Activated CD4-positive, alpha-beta memory T cell treated with anti-CD3 and anti-CD28 coated beads for 36 hours (primary cell): ENCODE measurements at regions of chr14 and their contacts with region 1.

Region 1: DNA sequence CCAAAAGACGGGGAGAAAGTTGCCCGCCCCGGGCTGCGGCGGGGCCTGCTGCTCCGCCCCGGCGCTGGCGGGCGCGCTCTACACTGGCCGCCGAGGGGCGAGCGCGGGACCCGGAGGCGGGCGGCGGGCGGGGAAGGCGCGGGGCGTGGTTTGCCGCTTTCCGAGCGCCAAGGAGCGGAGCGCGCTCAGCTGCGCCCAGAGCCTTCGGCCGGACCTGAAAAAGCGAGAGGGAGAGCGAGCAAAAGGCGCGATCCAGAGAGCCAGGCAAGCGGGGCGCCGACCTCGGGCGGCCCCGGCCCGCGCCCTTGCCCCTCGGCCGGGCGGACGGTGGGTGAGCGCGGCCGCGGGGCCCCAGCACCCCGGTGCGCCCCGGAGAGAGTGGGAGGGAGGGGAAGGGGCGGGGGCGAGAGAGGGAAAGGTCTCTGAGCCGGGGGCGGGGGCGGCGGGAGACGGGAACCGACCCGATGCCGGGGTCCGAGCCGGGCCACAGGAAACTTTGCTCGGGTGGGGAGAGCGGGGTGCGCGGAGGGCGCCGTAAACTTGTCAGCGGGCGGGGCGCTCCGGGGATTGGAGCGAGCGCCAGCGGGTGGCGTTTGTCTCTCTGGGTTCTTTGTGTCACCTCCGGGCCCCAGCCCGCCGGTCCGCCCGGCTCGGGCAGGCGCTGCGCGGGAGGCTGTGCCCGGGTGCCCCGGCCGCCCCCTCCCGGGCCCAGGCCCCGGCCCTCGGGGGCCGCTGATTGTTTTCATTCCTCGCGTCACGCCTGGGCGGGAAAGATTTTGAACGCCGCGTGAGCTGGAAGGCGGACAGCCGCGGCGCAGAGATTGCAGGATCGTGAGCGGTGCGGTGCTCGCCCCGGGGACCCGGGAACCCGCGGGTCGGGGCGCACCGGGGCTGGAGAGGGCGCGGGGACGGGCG is at the start of gene SYNE2:
- DNase-seq: peak; percentile 87
- H3K4me3 Mint-ChIP-seq: peak within 1 kb of the TSS; percentile 89
- H3K27ac Mint-ChIP-seq: peak within 1 kb of the TSS; percentile 86
- H3K4me1 Mint-ChIP-seq: peaks cover 39% of the 10 kb centered on the region
- H3K27me3 Mint-ChIP-seq: no peaks in the 10 kb centered on the region
- total RNA-seq, gene SYNE2: 27.6 to 27.7 TPM

Region 2: GRCh38 chr14:63470962-63471793 is 381.9 kb before region 1 on chr14:
- CTCF ChIA-PET with region 1: no interaction called
- POLR2A ChIA-PET with region 1: no interaction called
- intact Hi-C with region 1: loop called (anchors 10 kb)
- DNase-seq: no peak
- H3K4me3 Mint-ChIP-seq: no peak overlapping the region
- H3K27ac Mint-ChIP-seq: no peak overlapping the region
- H3K4me1 Mint-ChIP-seq: peaks cover 49% of the 10 kb centered on the region
- H3K27me3 Mint-ChIP-seq: no peaks in the 10 kb centered on the region

Region 3: DNA sequence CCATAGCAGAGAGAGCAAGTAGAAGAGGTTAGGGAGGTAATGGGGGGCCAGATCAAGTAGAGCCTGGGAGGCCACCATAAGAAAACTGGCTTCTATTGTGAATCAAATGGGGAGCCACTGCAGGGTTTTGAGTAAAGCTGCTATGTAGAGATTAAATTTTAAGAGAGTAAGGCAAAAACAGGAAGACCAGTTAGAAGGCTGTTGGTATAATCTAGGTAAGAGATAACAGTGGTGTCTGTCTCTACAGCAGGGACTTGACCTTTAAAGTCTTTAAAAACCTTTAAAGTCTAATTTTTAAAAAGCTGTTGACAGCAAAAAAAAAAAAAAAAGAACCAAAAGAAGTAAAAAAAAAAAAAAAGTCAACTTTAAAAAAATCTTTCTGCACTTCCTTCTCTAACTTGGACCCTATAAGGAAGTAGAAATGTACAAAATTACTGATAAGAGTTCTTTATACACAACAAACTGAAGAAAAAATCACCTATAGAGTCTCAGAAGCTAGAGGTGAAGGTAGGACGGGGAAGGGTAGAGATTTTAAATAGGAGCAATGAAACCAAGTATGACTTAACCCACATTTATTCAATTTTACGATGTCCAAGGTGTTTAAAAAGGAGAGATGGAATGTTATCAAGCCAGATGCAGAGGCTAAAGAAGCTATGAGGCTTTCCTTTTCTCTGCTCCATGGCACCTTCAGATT is 151.3 kb before region 1 on chr14:
- CTCF ChIA-PET with region 1: no interaction called
- POLR2A ChIA-PET with region 1: no interaction called
- intact Hi-C with region 1: no loop called
- DNase-seq: no peak
- H3K4me3 Mint-ChIP-seq: no peak overlapping the region
- H3K27ac Mint-ChIP-seq: no peak overlapping the region
- H3K4me1 Mint-ChIP-seq: peaks cover 18% of the 10 kb centered on the region
- H3K27me3 Mint-ChIP-seq: no peaks in the 10 kb centered on the region

Region 4: DNA sequence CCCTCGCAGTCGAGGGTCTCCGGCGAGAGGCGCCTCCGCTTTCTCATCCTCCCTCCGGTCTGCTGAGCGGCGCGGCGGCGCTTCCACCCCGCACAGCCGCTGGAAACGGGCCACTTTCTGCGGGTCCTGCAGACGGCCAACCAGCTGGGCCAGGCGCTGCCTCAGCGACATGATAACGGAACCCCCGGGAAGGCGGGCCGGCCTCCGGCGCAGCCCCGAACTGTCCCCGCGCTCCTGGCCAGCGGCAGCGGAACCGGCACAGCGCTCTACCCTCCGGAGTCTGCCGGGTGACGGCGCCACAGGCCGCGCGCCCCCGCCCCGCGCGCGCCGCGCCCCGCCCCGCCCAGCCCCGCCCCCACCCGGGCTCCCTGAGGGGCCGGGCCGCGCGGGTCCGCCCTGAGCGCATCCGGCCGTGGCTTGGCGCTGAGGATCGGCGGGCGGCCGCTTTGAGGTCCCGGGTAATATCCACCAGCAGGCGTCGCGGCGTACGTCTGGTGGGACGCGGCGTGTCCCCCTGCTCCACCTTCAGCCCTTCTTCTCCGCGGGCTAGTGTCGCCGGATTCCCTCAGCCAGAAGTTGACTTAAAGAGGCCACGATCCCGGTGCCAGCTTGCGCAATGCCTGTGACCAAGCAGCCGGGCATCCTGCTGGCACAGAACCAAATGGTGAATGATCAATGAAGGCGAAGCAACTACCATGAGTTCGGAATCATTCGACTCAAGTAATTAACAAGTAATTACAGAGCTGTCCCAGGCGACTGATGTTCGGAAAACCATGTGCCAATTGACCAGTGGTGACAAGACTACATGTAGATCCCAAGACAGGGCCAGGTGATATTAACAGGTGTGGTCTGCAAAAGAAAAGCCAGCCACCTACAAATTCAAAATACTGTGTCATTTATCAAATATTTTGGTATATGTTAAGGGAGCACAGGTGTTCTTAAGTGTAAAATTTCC is 125.0 kb before region 1 on chr14 and contains the start of gene SGPP1:
- CTCF ChIA-PET with region 1: interaction called, 4 read pairs
- POLR2A ChIA-PET with region 1: no interaction called
- intact Hi-C with region 1: loop called (anchors 5 kb)
- DNase-seq: peak; percentile 86
- H3K4me3 Mint-ChIP-seq: peak within 1 kb of the TSS; percentile 98
- H3K27ac Mint-ChIP-seq: peak within 1 kb of the TSS; percentile 86
- H3K4me1 Mint-ChIP-seq: peaks cover 25% of the 10 kb centered on the region
- H3K27me3 Mint-ChIP-seq: no peaks in the 10 kb centered on the region
- total RNA-seq, gene SGPP1: 10.5 to 11.3 TPM

Region 5: GRCh38 chr14:63881926-63882325 is 28.9 kb after region 1 on chr14:
- CTCF ChIA-PET with region 1: no interaction called
- POLR2A ChIA-PET with region 1: no interaction called
- intact Hi-C with region 1: no loop called
- DNase-seq: no peak
- H3K4me3 Mint-ChIP-seq: no peak overlapping the region
- H3K27ac Mint-ChIP-seq: no peak overlapping the region
- H3K4me1 Mint-ChIP-seq: peaks cover 29% of the 10 kb centered on the region
- H3K27me3 Mint-ChIP-seq: no peaks in the 10 kb centered on the region

Region 6: DNA sequence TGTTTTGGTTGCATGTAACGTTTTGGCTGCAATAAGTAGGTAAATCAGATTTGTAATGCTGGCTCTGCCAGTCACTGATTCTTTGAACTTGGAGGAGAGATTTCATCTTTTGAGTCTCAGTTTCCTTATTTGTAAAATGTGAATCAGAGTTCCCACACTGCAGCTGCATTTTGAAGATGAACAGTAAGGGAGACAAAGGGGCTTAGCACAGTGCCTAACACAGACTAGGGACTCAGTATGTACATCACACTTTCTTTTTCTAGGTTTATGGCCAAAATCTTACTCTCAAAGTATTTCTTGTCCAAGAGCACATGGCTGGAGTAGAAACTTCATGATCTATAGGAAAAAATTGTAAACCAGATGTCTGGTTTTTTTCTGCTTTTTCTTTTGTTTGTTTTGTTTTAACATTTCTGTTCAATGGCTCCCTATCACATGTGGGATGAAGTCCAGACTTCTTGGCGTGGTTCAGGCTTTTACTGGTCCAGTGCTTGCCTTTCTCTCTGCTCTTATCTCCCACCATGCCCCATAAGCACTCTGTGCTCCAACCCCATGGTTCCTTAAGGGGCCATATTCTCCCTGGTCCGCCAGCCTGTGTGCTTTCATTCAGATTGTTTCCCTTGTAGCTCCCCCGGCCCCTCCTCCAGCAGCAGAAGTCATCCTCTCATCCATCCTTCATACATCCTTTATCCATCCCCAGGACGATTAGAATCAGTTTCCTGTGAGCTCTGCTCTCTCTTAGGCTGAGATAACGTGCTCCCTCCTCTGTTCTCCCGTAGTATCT is 57.7 kb after region 1 on chr14:
- CTCF ChIA-PET with region 1: no interaction called
- POLR2A ChIA-PET with region 1: interaction called, 3 read pairs
- intact Hi-C with region 1: loop called (anchors 2 kb)
- DNase-seq: no peak
- H3K4me3 Mint-ChIP-seq: no peak overlapping the region
- H3K27ac Mint-ChIP-seq: peak overlapping the region; percentile 55
- H3K4me1 Mint-ChIP-seq: peaks cover 61% of the 10 kb centered on the region
- H3K27me3 Mint-ChIP-seq: no peaks in the 10 kb centered on the region

Region 7: GRCh38 chr14:63982156-63982555 is 129.1 kb after region 1 on chr14:
- CTCF ChIA-PET with region 1: no interaction called
- POLR2A ChIA-PET with region 1: no interaction called
- intact Hi-C with region 1: loop called (anchors 5 kb)
- DNase-seq: no peak
- H3K4me3 Mint-ChIP-seq: no peak overlapping the region
- H3K27ac Mint-ChIP-seq: no peak overlapping the region
- H3K4me1 Mint-ChIP-seq: peaks cover 15% of the 10 kb centered on the region
- H3K27me3 Mint-ChIP-seq: no peaks in the 10 kb centered on the region